Activated CD4-positive, alpha-beta T cell treated with anti-CD3 and anti-CD28 coated beads for 36 hours (primary cell): ENCODE measurements at regions of chr14 and their contacts with region 1.

Region 1: GRCh38 chr14:24114536-24115450 is at the starts of genes DCAF11 and NRL:
- DNase-seq: peak; percentile 99
- ATAC-seq: peak; percentile 89
- H3K4me3 Mint-ChIP-seq: peak within 1 kb of the TSS; percentile 85
- H3K27ac Mint-ChIP-seq: peak within 1 kb of the TSS; percentile 97
- H3K4me1 Mint-ChIP-seq: peaks cover 28% of the 10 kb centered on the region
- H3K27me3 Mint-ChIP-seq: no peaks in the 10 kb centered on the region
- total RNA-seq, gene DCAF11: 74.0 to 86.2 TPM
- total RNA-seq, gene NRL: 1.5 to 1.6 TPM

Region 2: GRCh38 chr14:23320774-23321571 is 793.8 kb before region 1 on chr14 and contains the start of gene PABPN1:
- CTCF ChIA-PET with region 1: no interaction called
- POLR2A ChIA-PET with region 1: no interaction called
- intact Hi-C with region 1: loop called in 1 of 2 experiments (anchors 1 kb)
- DNase-seq: peak; percentile 98
- ATAC-seq: peak; percentile 91
- H3K4me3 Mint-ChIP-seq: peak within 1 kb of the TSS; percentile 93
- H3K27ac Mint-ChIP-seq: peak within 1 kb of the TSS; percentile 95
- H3K4me1 Mint-ChIP-seq: peaks cover 25% of the 10 kb centered on the region
- H3K27me3 Mint-ChIP-seq: no peaks in the 10 kb centered on the region
- total RNA-seq, gene PABPN1: 237 to 338 TPM

Region 3: GRCh38 chr14:24051789-24052655 is 62.8 kb before region 1 on chr14 and contains the start of gene CARMIL3:
- CTCF ChIA-PET with region 1: interaction called, 71 read pairs
- POLR2A ChIA-PET with region 1: no interaction called
- intact Hi-C with region 1: loop called in 1 of 2 experiments (anchors 1 kb)
- DNase-seq: peak; percentile 77
- ATAC-seq: peak; percentile 57
- H3K4me3 Mint-ChIP-seq: peak within 1 kb of the TSS; percentile 57
- H3K27ac Mint-ChIP-seq: peak within 1 kb of the TSS; percentile 67
- H3K4me1 Mint-ChIP-seq: peaks cover 19% of the 10 kb centered on the region
- H3K27me3 Mint-ChIP-seq: peaks cover 8% of the 10 kb centered on the region
- total RNA-seq, gene CARMIL3: 0.74 to 0.91 TPM

Region 4: DNA sequence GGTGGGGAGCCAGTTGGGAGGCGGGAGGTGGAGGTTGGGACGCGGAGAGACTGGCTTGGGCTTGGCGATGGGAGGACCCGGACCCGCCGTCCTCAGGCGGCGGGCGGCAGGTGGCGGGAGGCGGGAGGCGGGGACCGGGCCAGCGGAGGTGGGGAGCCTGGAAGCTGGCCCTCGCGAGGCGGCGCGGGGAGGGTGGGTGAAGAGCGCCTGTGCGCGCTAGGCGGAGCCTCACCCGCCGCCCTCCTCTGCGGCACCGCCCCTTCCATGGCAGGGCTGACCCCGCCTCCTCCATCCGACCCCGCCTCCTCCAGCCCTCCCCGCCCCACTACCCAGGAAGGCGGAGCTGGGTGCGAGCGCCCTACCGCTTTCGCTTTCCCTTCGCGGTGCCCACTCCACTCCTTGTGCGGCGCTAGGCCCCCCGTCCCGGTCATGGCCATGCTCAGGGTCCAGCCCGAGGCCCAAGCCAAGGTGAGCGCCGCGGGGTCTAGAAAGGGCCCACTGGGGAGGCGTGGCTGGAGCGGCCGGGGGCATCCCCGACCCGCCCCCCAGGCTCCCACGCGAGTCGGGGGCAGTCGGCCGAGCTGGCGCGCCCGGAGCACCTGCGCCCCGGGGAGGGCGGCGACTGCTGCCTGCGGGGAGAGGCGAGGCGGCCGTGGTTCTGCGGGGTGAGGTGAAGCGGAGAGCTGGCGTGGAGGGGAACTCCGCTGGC is 21.2 kb after region 1 on chr14 and contains the start of gene PSME1:
- CTCF ChIA-PET with region 1: interaction called, 12 read pairs
- POLR2A ChIA-PET with region 1: interaction called, 35 read pairs
- intact Hi-C with region 1: loop called (anchors 1 kb)
- DNase-seq: peak; percentile 98
- ATAC-seq: peak; percentile 95
- H3K4me3 Mint-ChIP-seq: peak within 1 kb of the TSS; percentile 92
- H3K27ac Mint-ChIP-seq: peak within 1 kb of the TSS; percentile 92
- H3K4me1 Mint-ChIP-seq: peaks cover 50% of the 10 kb centered on the region
- H3K27me3 Mint-ChIP-seq: no peaks in the 10 kb centered on the region
- total RNA-seq, gene PSME1: 414 to 418 TPM

Region 5: GRCh38 chr14:24160850-24161804 is 46.3 kb after region 1 on chr14 and contains the start of gene IRF9:
- CTCF ChIA-PET with region 1: interaction called, 34 read pairs
- POLR2A ChIA-PET with region 1: interaction called, 27 read pairs
- intact Hi-C with region 1: loop called (anchors 1 kb)
- DNase-seq: peak; percentile 98
- ATAC-seq: peak; percentile 89
- H3K4me3 Mint-ChIP-seq: peak within 1 kb of the TSS; percentile 84
- H3K27ac Mint-ChIP-seq: peak within 1 kb of the TSS; percentile 97
- H3K4me1 Mint-ChIP-seq: peaks cover 35% of the 10 kb centered on the region
- H3K27me3 Mint-ChIP-seq: no peaks in the 10 kb centered on the region
- total RNA-seq, gene IRF9: 172 to 209 TPM

Region 6: DNA sequence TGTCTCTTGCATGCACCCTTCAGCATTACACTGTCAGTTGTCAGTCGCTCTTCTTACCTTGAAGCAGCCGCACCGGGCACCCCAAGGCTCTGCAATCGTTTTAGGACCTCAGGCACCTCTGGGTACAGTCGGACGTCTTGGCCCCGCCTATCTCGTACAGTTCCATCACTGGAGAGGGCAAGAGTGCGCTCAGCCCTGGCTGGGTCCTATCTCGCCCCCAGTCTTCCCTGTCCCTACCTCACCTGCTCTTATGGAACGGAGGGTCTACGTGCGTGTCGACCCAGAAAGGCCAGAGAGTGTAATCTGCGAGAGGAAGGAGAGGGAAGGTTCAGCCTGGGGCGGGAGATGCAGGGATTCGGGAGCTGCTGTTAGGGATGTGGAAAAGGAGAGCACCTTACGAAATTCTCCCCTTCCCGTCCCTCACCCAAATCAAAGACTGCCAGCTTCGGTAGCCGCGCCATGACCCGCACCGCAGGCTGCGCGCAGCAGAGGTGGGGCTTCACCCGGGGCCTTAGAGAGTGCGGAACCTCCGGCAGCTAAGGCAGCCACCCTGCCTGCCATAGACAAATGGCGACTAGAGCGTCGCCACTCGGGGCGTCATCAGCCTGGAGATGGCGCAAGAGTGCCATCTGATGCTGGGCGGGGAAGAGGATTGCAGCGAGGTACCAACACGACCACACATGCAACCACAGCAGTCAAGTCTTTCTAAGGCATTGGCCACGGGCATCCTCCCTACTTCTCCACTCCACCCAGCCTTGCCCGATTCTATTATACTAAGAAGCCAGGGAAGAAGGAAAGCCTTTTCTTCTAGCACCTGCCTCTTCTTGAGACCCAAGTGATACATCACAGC is 100.9 kb after region 1 on chr14 and contains the start of gene MDP1:
- CTCF ChIA-PET with region 1: no interaction called
- POLR2A ChIA-PET with region 1: interaction called, 5 read pairs
- intact Hi-C with region 1: loop called in 1 of 2 experiments (anchors 1 kb)
- DNase-seq: peak; percentile 93
- ATAC-seq: peak; percentile 76
- H3K4me3 Mint-ChIP-seq: peak within 1 kb of the TSS; percentile 92
- H3K27ac Mint-ChIP-seq: peak within 1 kb of the TSS; percentile 95
- H3K4me1 Mint-ChIP-seq: peaks cover 44% of the 10 kb centered on the region
- H3K27me3 Mint-ChIP-seq: no peaks in the 10 kb centered on the region
- total RNA-seq, gene MDP1: 4.5 to 11.7 TPM

Region 7: DNA sequence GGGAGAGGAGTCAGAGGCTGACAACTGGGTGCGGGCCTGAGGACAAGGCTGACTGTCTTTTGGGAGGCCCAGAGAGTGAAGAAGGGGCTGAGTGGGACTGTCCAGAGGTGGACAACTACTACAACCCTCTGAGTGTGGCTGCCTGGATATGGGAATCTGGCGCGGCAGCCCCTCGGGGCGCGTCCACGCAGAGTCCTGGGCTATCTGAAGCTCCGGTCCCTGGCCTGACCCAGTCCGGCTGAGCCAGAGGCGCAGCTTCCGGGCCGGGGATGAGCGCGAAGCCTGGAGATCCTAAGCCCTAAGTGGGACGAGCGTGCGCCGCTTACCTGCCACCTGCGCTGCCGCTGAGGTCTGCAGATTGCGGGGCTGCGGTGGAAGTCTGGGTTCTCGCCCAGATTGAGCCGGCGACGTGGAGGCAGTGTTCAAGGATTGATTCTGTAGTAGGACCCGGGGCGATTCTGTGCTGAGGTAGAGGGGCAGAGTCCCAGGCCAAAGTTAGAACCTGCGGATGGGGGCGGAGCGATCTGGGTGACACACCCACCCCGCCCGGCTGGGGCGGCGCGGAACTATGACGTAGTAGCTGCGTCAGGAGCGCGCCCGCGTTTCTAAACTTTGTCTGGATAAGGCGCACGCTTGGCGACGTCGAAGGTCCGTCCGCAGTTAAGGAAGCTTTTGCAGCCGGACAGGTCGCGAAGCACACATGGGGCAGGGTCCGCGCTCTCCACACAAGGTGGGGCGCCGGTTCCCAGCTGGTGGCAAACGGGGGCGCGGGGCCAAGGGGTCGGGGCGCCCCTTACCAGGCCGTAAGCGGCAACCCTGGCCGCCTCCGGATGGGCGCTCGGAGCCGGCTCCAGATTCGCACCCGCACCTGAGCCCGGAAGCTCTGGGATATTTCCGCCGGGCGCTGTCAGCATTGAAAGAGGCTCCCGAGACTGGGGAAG is 184.7 kb after region 1 on chr14 and contains the starts of genes DHRS1 and NOP9:
- CTCF ChIA-PET with region 1: interaction called, 4 read pairs
- POLR2A ChIA-PET with region 1: interaction called, 6 read pairs
- intact Hi-C with region 1: loop called in 1 of 2 experiments (anchors 1 kb)
- DNase-seq: peak; percentile 96
- ATAC-seq: peak; percentile 67
- H3K4me3 Mint-ChIP-seq: peak within 1 kb of the TSS; percentile 91
- H3K27ac Mint-ChIP-seq: peak within 1 kb of the TSS; percentile 77
- H3K4me1 Mint-ChIP-seq: peaks cover 51% of the 10 kb centered on the region
- H3K27me3 Mint-ChIP-seq: no peaks in the 10 kb centered on the region
- total RNA-seq, gene DHRS1: 11.7 to 14.6 TPM
- total RNA-seq, gene NOP9: 24.4 to 32.5 TPM